ENCODE measurements at regions of chr2 and their contacts with region 1.

Region 1: DNA sequence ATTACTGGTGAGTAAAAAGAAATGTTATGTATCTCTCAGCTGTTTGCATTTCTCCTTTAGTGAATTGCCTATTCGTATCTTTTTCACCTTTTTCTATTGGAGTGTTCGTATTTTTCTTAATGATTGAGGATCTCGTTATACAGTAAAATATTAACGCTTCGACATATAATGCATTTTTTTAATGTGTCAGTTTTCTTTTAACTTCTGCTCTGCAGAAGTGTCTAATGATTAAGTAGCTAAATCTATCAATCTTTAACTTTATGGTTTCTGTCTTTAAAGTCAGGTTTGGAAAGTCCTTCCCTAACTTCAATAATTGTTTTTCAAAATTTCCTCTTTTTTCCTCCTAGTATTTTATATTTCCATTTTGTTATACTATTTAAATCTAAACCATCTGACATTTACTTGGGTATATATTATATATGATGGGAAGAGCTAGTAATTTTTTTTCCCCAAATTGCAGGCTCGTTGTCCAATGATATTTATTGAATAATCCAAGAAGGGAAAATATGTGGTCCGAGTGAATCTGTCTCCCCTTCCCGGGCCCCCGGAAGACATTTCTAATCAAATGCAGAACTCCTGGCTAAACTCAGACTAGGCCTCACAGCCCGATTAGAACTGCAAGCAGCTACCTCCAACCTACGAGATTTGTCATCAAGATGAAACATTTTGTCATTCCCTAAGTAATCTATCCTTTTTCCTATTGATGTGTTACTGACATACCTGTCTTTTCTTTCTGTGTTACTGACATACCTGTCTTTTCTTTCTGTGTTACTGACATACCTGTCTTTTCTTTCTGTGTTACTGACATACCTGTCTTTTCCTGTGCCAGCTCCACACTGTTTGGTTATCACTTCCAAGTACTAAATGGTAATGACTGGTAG is 17.2 kb downstream of the PCBP1 start:
- DNase-seq: peak in 3 of 9 experiments; percentile 30 to 61 (median 44)
- ATAC-seq: no peak
- H3K4me3 ChIP-seq: peak overlapping the region; percentile 29 to 44
- H3K4me3 Mint-ChIP-seq: peak overlapping the region; percentile 80
- H3K27ac ChIP-seq: peak overlapping the region; percentile 59 to 85
- H3K27ac Mint-ChIP-seq: peak overlapping the region; percentile 96
- H3K4me1 ChIP-seq: peaks cover 52% of the 10 kb centered on the region
- H3K4me1 Mint-ChIP-seq: peaks cover 50% of the 10 kb centered on the region
- H3K27me3 ChIP-seq: no peaks in the 10 kb centered on the region
- H3K27me3 Mint-ChIP-seq: no peaks in the 10 kb centered on the region
- CTCF ChIP-seq: no peak

Region 2: DNA sequence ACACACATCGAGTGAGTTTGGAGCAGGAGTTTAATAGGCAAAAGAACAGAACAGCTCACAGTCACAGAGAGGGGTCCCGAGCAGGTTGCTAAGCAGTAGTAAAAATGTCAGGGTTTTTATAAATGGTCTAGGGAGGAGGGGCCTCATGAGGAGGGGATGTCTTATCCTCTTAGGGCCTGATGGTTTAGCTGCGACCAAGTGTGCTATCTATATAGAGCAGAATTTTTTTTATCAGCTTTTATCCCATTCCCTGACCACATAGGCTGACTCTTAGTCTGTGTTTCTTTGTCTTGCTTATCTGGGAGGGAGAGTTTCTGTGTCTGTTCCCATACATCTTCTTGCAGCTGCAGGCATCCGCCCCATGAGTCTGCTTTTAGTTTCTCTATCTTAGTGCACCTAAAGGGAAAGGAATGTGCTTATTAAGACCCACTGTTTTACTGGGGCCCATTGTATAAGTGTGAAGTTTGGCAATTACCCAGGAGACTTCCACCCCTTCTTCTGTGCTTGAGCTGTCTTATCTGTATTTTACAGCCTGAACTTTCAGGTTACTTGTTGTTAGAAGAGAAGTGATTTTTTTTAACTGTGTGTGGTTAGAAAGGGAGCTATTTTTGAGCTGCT is 305.5 kb before region 1 on chr2:
- CTCF ChIA-PET with region 1: no interaction called
- POLR2A ChIA-PET with region 1: no interaction called
- intact Hi-C with region 1: no loop called
- DNase-seq: no peak
- ATAC-seq: no peak
- H3K4me3 ChIP-seq: no peak overlapping the region
- H3K4me3 Mint-ChIP-seq: peak overlapping the region; percentile 44
- H3K27ac ChIP-seq: no peak overlapping the region
- H3K27ac Mint-ChIP-seq: no peak overlapping the region
- H3K4me1 ChIP-seq: peaks cover 5% of the 10 kb centered on the region
- H3K4me1 Mint-ChIP-seq: peaks cover 17% of the 10 kb centered on the region
- H3K27me3 ChIP-seq: no peaks in the 10 kb centered on the region
- H3K27me3 Mint-ChIP-seq: no peaks in the 10 kb centered on the region
- CTCF ChIP-seq: no peak

Region 3: DNA sequence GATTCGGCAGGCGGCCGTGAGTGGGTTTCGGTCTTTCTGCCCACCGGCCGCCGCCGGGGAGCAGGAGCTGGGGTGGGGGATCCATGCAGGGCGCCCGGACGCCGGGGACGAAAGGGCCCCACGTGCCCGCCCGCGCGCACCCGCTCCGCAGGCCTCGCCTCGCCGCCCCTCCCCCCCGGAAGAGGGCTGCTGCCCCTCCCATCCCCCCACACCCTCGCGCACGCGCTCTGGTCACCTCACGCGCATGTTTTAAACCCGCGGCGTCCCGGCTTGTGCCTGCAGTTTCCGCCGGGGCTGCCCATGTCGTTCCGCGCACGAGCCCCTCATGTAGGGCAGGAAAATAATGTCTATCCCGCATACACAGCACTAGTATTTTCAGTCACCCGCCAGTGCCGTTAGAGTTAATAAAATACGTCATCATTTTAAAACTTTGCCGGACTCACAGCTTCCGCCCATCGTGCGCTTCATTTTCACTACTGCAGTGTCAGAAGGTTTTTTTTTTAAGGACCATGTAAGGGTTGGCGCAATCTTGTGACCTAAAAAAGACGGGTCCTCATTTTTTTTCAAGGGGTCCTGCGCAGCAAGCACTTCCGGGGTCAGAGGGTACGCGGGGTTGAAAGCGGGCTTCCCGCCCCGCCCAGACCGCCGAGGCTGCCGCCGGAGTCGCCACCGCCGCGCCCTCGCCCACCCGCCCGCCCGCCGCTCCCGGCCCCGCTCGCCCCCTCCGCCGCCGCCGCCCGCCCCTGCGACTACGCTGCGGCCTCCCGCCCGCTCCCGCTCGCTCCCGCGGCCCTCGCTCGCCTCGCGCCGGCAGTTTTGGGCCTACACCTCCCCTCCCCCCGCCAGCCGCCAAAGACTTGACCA is 17.4 kb before region 1 on chr2 and contains the start of gene PCBP1:
- CTCF ChIA-PET with region 1: interaction called, 6 read pairs
- POLR2A ChIA-PET with region 1: interaction called, 70 read pairs
- intact Hi-C with region 1: no loop called
- DNase-seq: peak; percentile 95 to 100 (median 98)
- ATAC-seq: peak; percentile 60
- H3K4me3 ChIP-seq: peak within 1 kb of the TSS; percentile 95 to 98
- H3K4me3 Mint-ChIP-seq: peak within 1 kb of the TSS; percentile 98
- H3K27ac ChIP-seq: peak within 1 kb of the TSS; percentile 99
- H3K27ac Mint-ChIP-seq: peak within 1 kb of the TSS; percentile 100
- H3K4me1 ChIP-seq: peaks cover 62% of the 10 kb centered on the region
- H3K4me1 Mint-ChIP-seq: peaks cover 69% of the 10 kb centered on the region
- H3K27me3 ChIP-seq: no peaks in the 10 kb centered on the region
- H3K27me3 Mint-ChIP-seq: no peaks in the 10 kb centered on the region
- CTCF ChIP-seq: no peak
- total RNA-seq, gene PCBP1: 239 to 255 TPM

Region 4: DNA sequence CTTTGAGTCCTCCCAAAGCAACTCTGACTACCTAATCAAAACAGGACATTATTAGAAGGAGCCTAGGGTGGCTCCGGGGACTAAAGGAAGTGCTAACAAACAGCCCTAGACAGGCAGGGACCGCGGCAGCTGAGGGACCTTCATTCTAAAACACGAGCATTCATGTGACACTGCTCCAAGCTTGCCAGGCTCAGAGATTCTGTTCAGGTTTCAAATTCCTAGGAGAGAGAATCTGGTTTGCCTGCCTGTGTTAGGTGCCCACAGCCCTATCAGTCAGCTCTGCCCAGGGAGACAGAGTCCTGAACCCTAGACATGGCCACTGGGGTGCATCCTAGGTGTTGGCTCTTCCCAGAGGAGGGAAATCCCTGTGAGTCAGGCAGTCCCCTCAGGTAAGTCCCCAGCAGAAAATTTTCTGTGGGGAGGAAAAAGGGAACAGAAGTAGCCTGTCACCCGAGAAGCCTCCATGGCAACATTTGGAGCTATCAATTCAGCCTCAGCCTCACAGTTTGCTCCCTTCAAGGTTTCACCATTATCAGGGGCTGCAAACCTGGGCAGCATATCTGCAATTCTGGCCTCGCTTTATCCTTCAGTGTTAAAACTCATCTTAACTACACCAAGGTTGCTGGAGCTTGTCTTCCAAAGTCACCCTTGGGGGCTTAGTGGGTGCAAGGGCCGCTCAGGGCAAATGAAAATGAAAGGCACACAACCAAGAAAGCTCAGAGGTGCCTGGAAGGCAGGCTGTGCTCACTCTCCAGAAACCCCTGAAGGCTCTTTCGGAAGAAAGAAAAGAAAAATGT is 11.4 kb after region 1 on chr2:
- CTCF ChIA-PET with region 1: interaction called, 7 read pairs
- POLR2A ChIA-PET with region 1: interaction called, 21 read pairs
- intact Hi-C with region 1: no loop called
- DNase-seq: peak in 1 of 9 experiments; percentile 36
- ATAC-seq: peak; percentile 35
- H3K4me3 ChIP-seq: no peak overlapping the region
- H3K4me3 Mint-ChIP-seq: peak overlapping the region; percentile 26
- H3K27ac ChIP-seq: peak overlapping the region in 1 of 2 experiments; percentile 23
- H3K27ac Mint-ChIP-seq: peak overlapping the region; percentile 69
- H3K4me1 ChIP-seq: peaks cover 44% of the 10 kb centered on the region
- H3K4me1 Mint-ChIP-seq: peaks cover 54% of the 10 kb centered on the region
- H3K27me3 ChIP-seq: no peaks in the 10 kb centered on the region
- H3K27me3 Mint-ChIP-seq: no peaks in the 10 kb centered on the region
- CTCF ChIP-seq: no peak

Region 5: GRCh38 chr2:70124983-70125480 is 20.6 kb after region 1 on chr2:
- CTCF ChIA-PET with region 1: interaction called, 7 read pairs
- POLR2A ChIA-PET with region 1: interaction called, 62 read pairs
- intact Hi-C with region 1: loop called (anchors 1 to 2 kb)
- DNase-seq: peak; percentile 52 to 85 (median 70)
- ATAC-seq: peak; percentile 64
- H3K4me3 ChIP-seq: peak overlapping the region; percentile 47 to 61
- H3K4me3 Mint-ChIP-seq: peak overlapping the region; percentile 95
- H3K27ac ChIP-seq: peak overlapping the region; percentile 97
- H3K27ac Mint-ChIP-seq: peak overlapping the region; percentile 100
- H3K4me1 ChIP-seq: peaks cover 62% of the 10 kb centered on the region
- H3K4me1 Mint-ChIP-seq: peaks cover 70% of the 10 kb centered on the region
- H3K27me3 ChIP-seq: no peaks in the 10 kb centered on the region
- H3K27me3 Mint-ChIP-seq: no peaks in the 10 kb centered on the region
- CTCF ChIP-seq: no peak

Region 6: DNA sequence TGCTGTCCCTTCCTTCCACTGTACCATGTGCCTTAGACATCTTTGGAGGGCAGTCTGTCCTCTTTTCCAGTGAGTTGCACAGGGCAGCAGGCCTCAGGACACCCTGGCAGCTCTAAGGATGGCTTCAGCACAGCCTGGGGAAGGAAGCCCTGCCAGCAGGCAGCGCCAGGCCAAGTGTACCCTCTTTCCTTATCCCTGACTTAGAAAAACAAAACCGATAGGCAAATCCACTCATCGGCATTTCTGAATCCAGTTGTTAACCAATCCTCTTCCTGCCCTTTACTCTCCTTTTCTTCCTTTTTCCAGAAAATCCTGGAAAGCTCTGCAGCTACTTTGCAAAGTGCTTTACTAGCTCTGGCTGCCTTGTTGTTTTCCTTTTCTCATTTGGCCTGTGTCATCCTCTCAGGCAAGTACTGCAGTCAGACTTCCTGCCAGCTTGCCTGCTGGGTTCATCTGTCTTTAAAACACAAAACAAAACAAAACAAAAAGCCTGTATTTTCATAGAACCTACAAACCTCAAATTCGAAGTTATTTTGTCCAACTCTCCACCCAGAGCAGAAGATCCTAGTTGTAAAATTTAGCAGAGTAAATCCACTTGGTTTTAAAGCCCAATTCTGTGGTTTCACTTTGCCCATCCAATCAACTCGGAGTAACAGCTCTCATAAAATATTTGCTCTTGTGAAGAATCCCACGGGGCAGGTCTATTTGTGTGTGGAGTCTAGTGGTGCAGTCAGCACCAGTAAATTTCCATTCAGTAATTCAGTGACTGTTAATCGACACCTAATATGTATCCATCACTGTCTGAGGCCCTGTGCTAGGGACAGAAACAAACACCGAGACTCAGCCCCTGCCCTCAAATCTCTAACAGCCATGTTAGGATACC is 28.0 kb after region 1 on chr2:
- CTCF ChIA-PET with region 1: interaction called, 6 read pairs
- POLR2A ChIA-PET with region 1: interaction called, 34 read pairs
- intact Hi-C with region 1: no loop called
- DNase-seq: peak in 6 of 9 experiments; percentile 48 to 78 (median 60)
- ATAC-seq: peak; percentile 53
- H3K4me3 ChIP-seq: peak overlapping the region; percentile 29 to 49
- H3K4me3 Mint-ChIP-seq: peak overlapping the region; percentile 91
- H3K27ac ChIP-seq: peak overlapping the region; percentile 62 to 90
- H3K27ac Mint-ChIP-seq: peak overlapping the region; percentile 98
- H3K4me1 ChIP-seq: peaks cover 74% of the 10 kb centered on the region
- H3K4me1 Mint-ChIP-seq: peaks cover 75% of the 10 kb centered on the region
- H3K27me3 ChIP-seq: no peaks in the 10 kb centered on the region
- H3K27me3 Mint-ChIP-seq: no peaks in the 10 kb centered on the region
- CTCF ChIP-seq: no peak

Measured in CD8-positive, alpha-beta T cell (primary cell).